ENCODE measurements at regions of chr3 and their contacts with region 1.

Region 1: GRCh38 chr3:123068601-123069381 is 2.0 kb downstream of the PDIA5 start:
- DNase-seq: no peak
- H3K4me3 ChIP-seq: peak overlapping the region; percentile 86 to 92 (median 87)
- H3K27ac ChIP-seq: no peak overlapping the region
- H3K4me1 ChIP-seq: no peaks in the 10 kb centered on the region
- H3K27me3 ChIP-seq: no peaks in the 10 kb centered on the region
- CTCF ChIP-seq: no peak
- POLR2A ChIP-seq: no peak

Region 2: DNA sequence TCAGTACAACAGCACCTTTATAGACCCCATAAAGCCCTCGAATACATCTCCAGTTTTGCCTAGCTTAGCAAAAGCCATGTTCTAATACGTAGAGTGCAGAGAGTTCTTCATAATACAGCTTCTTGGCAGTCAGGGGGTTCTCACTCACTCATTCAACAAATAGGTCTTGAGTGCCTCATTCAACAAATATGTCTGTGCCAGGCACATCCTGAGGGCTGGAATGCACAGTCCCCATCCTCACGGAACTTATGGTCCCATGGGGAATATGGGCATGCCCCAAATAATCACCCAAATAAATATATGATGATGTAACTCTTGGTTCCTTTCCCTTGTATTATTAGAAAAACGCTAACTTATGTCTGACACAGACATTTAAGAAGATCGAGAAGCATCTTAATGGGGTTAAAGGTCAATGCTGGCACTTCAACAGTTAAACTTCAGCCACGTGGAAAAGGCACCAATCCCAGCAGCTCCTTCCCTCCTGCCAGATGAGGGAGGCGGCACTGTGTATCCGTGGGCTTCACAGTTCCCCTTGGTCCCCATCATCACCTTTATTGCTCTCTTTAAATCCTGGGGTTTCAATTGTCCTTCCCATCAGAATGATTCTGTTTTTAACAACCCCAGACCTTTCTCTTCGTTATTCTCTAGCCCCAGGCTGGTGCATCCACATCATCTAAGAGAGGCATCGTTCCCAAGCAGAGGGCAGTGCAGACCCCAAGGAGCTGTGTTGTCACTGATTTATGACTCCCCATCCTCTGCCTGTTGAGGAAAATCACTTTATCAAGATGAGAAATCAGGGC is 22.3 kb before region 1 on chr3:
- intact Hi-C with region 1: loop called (anchors 1 kb)
- DNase-seq: no peak
- H3K4me3 ChIP-seq: no peak overlapping the region
- H3K27ac ChIP-seq: no peak overlapping the region
- H3K4me1 ChIP-seq: no peaks in the 10 kb centered on the region
- H3K27me3 ChIP-seq: peaks cover 0 to 5% of the 10 kb centered on the region in 2 donors
- CTCF ChIP-seq: no peak
- POLR2A ChIP-seq: no peak